Pancreas (tissue), 10 donors: ENCODE measurements at regions of chr10 and their contacts with region 1.

Region 1: DNA sequence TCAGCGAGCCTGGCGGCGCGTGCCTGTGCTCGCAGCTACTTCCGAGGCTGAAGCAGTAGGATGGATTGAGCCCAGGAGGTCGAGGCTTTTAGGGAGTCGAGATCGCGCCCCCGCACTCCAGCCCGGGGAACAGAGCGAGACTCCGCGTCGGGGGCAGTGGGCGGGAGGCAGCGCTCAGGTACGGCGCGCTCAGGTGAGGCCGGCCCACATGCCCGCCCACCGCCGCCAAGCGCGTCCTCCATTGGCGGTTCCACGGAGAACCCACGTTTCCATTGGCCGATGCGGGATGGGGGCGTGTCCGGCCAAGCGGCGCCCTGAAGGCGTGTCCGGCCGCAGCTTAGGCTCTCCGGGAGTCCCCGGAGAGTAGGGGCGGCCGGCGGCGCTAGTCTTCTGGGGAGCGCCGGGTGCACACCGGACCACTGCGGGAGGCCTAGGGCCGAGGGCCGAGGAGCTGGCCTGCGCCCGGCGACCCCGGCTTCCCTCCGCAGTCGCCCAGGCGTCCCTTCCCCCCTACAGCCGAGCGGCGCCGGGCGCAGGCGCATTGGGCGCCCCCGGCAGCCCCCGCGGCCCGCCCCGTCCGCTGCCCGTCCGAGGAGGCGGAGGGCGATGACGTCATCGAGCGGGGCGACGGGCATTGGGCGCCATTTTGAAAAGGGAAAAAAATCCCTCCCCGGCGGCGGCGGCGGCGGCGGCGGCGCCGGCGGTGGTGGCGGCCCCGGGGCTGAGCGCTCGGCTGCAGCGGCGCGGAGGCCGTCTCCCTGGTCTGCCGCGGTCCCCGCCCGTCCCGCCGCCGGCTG is at the start of gene PPP2R2D:
- DNase-seq: peak; percentile 96 to 99 (median 98)
- ATAC-seq: peak; percentile 85 to 97 (median 93)
- H3K4me3 ChIP-seq: peak within 1 kb of the TSS; percentile 71 to 98 (median 86)
- H3K27ac ChIP-seq: peak within 1 kb of the TSS; percentile 93 to 96 (median 95)
- H3K4me1 ChIP-seq: peaks cover 0 to 28% (median 0%) of the 10 kb centered on the region in 3 donors
- H3K27me3 ChIP-seq: no peaks in the 10 kb centered on the region
- CTCF ChIP-seq: no peak
- total RNA-seq, gene PPP2R2D: 25.5 to 87.7 (median 33.6) TPM

Region 2: GRCh38 chr10:131676511-131677421 is 223.8 kb before region 1 on chr10:
- intact Hi-C with region 1: no loop called
- DNase-seq: no peak
- ATAC-seq: no peak
- H3K4me3 ChIP-seq: no peak overlapping the region
- H3K27ac ChIP-seq: no peak overlapping the region
- H3K4me1 ChIP-seq: no peaks in the 10 kb centered on the region
- H3K27me3 ChIP-seq: no peaks in the 10 kb centered on the region
- CTCF ChIP-seq: no peak

Region 3: DNA sequence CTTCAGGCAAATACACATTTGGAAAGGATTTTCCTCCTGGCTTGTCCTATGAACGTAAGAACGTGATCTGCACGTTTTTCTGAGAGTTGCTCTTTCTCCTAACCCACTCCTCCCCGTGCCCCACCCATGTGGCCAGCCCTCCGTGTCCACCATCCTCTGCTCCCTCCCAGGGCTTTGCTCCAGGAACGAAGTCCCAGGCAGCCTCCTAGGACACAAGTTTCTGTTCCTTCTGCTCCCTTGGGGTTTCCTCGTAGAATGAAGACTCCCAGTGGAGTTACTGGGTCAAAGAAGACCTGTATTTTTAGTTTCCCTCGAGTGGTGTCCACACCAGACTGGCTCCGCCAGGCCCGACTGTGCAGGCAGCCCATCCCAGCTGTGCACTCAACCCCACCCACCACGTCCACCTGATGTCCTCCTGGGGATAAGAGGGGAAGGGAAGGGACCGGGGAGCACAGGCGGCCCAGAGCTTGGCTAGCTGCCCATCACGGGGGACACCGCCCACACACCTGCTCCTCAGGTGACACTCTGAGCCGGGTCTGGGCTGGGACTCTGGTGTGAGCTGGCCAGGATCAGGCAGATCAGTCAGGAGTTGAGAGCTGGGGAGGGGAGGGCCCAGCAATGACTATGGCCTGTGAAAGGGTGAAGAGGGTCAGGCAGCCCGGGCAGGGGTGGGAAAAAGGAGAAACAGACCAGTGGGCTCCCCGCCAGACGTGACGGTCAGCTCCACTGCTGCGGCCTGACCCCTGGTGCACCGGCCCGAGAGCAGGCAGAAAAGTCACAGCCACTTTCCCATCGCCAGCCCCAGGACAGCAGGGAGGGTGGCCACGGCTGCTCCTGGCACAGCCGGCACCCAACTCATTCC is 54.1 kb before region 1 on chr10:
- intact Hi-C with region 1: no loop called
- DNase-seq: peak in 2 of 6 donors; percentile 47 to 61
- ATAC-seq: no peak
- H3K4me3 ChIP-seq: no peak overlapping the region
- H3K27ac ChIP-seq: no peak overlapping the region
- H3K4me1 ChIP-seq: no peaks in the 10 kb centered on the region
- H3K27me3 ChIP-seq: no peaks in the 10 kb centered on the region
- CTCF ChIP-seq: no peak

Region 4: DNA sequence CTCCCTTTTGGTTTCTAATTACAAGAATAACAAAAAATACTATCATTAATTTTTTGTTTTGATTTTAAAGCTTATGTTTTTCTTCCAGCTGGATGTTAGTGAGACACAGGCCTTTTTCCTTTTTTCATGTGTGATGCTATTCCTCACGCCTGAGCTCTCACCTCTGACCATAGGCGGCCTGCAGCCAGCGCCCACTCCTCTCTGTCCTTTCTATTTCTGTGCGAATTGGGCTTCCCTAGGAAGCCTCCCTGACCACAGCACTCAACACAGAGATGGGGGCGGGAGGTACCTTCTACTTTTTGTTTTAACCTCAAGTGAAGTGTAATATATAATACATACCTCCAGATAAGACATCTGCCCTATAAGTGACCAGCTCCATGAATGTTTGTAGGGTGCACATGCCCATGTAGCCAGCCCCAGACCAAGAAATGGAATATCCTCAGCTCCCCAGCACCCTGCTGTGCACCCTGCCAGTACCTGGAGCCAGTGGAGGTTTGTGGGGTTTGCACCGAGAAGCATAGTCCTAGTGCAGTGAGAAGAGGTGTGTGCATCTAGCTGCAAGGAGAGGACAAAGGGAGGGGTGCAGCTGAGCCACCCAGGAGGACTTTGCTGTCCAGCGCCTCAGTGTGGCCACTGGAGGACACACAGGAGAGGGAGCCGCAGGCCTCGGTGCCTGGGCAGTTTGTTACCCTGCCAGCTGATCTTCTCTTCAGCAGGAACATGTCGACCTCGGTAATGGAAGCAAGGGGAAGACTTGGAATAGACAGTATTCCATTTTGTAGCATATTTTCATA is 42.7 kb after region 1 on chr10:
- intact Hi-C with region 1: loop called in 1 of 3 experiments (anchors 5 kb)
- DNase-seq: peak in 5 of 6 donors; percentile 56 to 84 (median 75)
- ATAC-seq: peak; percentile 59 to 84 (median 82)
- H3K4me3 ChIP-seq: no peak overlapping the region
- H3K27ac ChIP-seq: no peak overlapping the region
- H3K4me1 ChIP-seq: peaks cover 36 to 47% (median 37%) of the 10 kb centered on the region in 3 donors
- H3K27me3 ChIP-seq: no peaks in the 10 kb centered on the region
- CTCF ChIP-seq: peak; percentile 13 to 44 (median 33)

Region 5: DNA sequence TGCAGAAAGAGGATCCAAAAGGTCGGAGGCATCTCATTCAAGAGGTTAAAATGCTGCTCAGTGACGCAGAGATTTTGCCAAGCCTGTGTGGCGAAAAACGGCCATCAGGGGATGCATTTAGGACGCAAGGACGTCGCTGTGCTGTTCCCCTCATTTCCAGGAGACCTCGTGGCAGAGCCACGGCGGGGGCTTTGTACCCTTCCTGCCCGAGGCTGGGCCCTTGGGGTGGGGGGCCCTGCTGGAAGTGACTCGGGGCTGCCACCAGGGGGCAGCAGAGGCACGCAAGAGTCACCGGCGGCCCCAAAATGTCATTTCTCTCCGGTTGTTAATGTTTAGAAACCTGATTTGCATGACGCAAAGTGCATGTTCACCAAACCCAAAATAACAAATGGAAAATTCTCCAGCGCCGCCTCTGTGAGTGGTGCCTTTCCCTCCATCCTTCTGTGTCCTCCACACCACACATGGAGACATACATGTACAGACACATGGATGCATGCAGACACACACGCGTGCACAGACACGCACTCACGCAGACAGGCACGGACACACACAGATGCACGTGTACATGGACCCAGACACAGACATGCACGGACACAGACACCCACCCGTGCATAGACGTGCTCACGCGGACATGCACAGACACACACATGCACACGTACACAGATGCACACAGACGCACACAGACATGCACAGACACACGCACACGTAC is 936.4 kb after region 1 on chr10:
- intact Hi-C with region 1: no loop called
- DNase-seq: peak in 3 of 6 donors; percentile 41 to 80 (median 65)
- ATAC-seq: peak; percentile 60 to 80 (median 80)
- H3K4me3 ChIP-seq: no peak overlapping the region
- H3K27ac ChIP-seq: no peak overlapping the region
- H3K4me1 ChIP-seq: no peaks in the 10 kb centered on the region
- H3K27me3 ChIP-seq: peaks cover 0 to 7% (median 0%) of the 10 kb centered on the region in 4 donors
- CTCF ChIP-seq: peak; percentile 95 to 98 (median 96)